H1 (cell line): ENCODE measurements at regions of chr5 and their contacts with region 1.

Region 1: DNA sequence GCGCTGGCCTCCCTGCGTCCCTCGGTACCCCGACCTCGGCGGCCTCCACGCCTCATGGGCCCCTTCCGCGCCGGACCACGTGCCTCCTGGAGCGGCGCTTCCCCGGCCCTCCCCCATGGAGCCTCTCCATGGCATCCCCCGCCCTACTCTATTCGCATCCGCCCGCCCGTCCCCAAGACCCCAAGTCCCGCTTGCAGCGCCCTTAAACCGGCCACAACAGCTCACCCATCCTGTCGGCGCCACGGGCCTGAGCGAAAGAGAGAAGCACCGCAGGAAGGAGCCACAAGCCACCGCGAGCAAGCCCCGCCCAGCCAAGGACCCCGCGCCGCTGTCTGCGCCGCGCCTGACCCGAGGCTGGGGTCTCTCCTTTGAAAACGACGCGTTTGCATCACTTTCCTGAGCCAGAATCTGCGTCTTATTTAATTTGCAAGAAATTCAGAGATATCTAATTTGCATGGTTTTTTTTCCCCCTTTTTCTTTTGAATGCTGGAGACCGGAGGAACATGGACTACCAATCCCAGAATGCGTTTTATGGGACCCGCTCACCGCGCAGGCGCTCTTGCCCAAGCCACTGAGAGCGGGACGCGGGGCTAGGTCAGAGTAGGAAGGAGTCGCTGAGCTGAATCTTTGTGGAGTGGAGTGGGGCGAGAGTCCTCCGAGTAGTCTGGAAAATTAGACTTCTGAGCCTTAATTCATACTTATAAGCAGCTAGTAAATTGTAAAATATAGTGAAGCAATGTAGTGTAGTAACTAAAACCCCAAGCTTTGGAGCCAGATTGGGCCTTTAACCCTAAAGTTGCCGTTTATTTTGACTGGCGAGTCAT is at the start of gene RPS23:
- DNase-seq: peak in 1 of 2 experiments; percentile 89
- H3K4me3 ChIP-seq: peak within 1 kb of the TSS; percentile 98 to 100 (median 99)
- H3K27ac ChIP-seq: peak within 1 kb of the TSS; percentile 92
- H3K4me1 ChIP-seq: peaks cover 3 to 7% (median 6%) of the 10 kb centered on the region in 4 experiments; a peak in 6 of 7 replicates
- H3K27me3 ChIP-seq: no peaks in the 10 kb centered on the region
- CTCF ChIP-seq: no peak
- EP300 ChIP-seq: no peak
- POLR2A ChIP-seq: peak; percentile 89 to 95; a peak in 2 of 3 replicates
- RAD21 ChIP-seq: no peak
- total RNA-seq, gene RPS23: 2,559 and 2,561 TPM in 2 replicates

Region 2: GRCh38 chr5:82054004-82054710 is 224.2 kb before region 1 on chr5:
- CTCF ChIA-PET with region 1: no interaction called
- POLR2A ChIA-PET with region 1: no interaction called
- DNase-seq: no peak
- H3K4me3 ChIP-seq: no peak overlapping the region
- H3K27ac ChIP-seq: no peak overlapping the region
- H3K4me1 ChIP-seq: peaks cover 0 to 7% (median 0%) of the 10 kb centered on the region in 4 experiments; a peak in 2 of 7 replicates
- H3K27me3 ChIP-seq: no peaks in the 10 kb centered on the region
- CTCF ChIP-seq: no peak
- EP300 ChIP-seq: no peak
- POLR2A ChIP-seq: no peak
- RAD21 ChIP-seq: no peak

Region 3: GRCh38 chr5:82265047-82265446 is 13.3 kb before region 1 on chr5:
- CTCF ChIA-PET with region 1: interaction called, 14 read pairs
- POLR2A ChIA-PET with region 1: interaction called, 42 read pairs
- DNase-seq: no peak
- H3K4me3 ChIP-seq: no peak overlapping the region
- H3K27ac ChIP-seq: no peak overlapping the region
- H3K4me1 ChIP-seq: no peaks in the 10 kb centered on the region
- H3K27me3 ChIP-seq: no peaks in the 10 kb centered on the region
- CTCF ChIP-seq: no peak
- EP300 ChIP-seq: no peak
- POLR2A ChIP-seq: no peak
- RAD21 ChIP-seq: no peak

Region 4: GRCh38 chr5:82295144-82295543 is 16.8 kb after region 1 on chr5:
- CTCF ChIA-PET with region 1: interaction called, 4 read pairs
- POLR2A ChIA-PET with region 1: interaction called, 120 read pairs
- DNase-seq: no peak
- H3K4me3 ChIP-seq: no peak overlapping the region
- H3K27ac ChIP-seq: no peak overlapping the region
- H3K4me1 ChIP-seq: peaks cover 8 to 18% (median 10%) of the 10 kb centered on the region in 4 experiments; a peak in 6 of 7 replicates
- H3K27me3 ChIP-seq: peaks cover 0 to 1% (median 0%) of the 10 kb centered on the region in 4 experiments; a peak in 4 of 7 replicates
- CTCF ChIP-seq: no peak
- EP300 ChIP-seq: no peak
- POLR2A ChIP-seq: no peak
- RAD21 ChIP-seq: no peak

Region 5: DNA sequence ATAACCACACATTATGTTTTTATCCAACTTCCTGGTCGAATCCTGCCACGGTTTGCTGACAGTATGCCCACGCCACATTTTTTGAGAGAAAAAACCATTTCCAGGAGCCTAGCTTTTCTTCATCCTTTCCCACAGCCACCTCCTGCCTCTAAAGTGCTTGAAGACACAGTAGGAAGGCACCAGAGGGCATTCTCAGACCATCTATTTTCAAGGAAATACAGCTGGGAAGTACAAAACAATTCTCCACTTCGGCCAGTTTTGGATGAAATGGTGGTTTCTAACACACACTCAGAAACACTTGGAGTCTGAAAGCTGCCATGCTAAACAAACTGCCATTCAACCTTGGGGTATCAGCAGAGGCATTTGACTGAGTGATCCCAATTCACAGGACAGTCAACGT is 86.2 kb after region 1 on chr5:
- CTCF ChIA-PET with region 1: no interaction called
- POLR2A ChIA-PET with region 1: no interaction called
- DNase-seq: no peak
- H3K4me3 ChIP-seq: no peak overlapping the region
- H3K27ac ChIP-seq: no peak overlapping the region
- H3K4me1 ChIP-seq: no peaks in the 10 kb centered on the region
- H3K27me3 ChIP-seq: no peaks in the 10 kb centered on the region
- CTCF ChIP-seq: peak in 2 of 3 experiments; percentile 56 to 57; a peak in 3 of 4 replicates
- EP300 ChIP-seq: no peak
- POLR2A ChIP-seq: no peak
- RAD21 ChIP-seq: peak; percentile 86 to 87

Region 6: DNA sequence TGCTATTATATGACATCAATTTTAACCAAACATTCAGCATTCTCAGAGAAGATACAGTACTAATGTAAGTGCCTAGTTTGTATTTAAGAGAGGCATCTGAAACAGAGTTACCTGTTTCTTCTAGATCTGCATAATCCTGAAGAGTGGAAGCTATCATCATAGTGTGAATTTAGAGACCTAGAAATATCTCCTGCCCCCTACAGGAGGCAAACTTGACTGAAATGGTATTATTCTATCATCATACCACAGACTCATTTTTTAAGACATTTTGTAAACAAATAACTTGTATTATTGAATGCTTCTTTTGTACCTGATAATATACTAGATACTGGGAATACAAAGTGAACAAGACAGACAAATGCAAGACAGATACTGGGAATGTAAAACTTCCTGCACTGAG is 216.6 kb after region 1 on chr5:
- CTCF ChIA-PET with region 1: no interaction called
- POLR2A ChIA-PET with region 1: no interaction called
- DNase-seq: no peak
- H3K4me3 ChIP-seq: no peak overlapping the region
- H3K27ac ChIP-seq: no peak overlapping the region
- H3K4me1 ChIP-seq: no peaks in the 10 kb centered on the region
- H3K27me3 ChIP-seq: no peaks in the 10 kb centered on the region
- CTCF ChIP-seq: peak in 1 of 3 experiments; percentile 34; a peak in 1 of 4 replicates
- EP300 ChIP-seq: no peak
- POLR2A ChIP-seq: no peak
- RAD21 ChIP-seq: peak in 1 of 2 experiments; percentile 15; a peak in 2 of 4 replicates